ENCODE measurements at regions of chr14 and their contacts with region 1.

Region 1: GRCh38 chr14:70955543-70956480 is 48.6 kb downstream of the PCNX1 start:
- DNase-seq: peak; percentile 55 to 62 (median 58)
- H3K4me3 ChIP-seq: no peak overlapping the region
- H3K4me3 Mint-ChIP-seq: peak overlapping the region in 3 of 8 donors; percentile 66 to 79 (median 74)
- H3K27ac ChIP-seq: no peak overlapping the region
- H3K27ac Mint-ChIP-seq: peak overlapping the region; percentile 15 to 81 (median 70)
- H3K4me1 ChIP-seq: peaks cover 51% of the 10 kb centered on the region
- H3K4me1 Mint-ChIP-seq: peaks cover 35 to 55% (median 42%) of the 10 kb centered on the region in 4 donors
- H3K27me3 ChIP-seq: no peaks in the 10 kb centered on the region
- H3K27me3 Mint-ChIP-seq: no peaks in the 10 kb centered on the region

Region 2: GRCh38 chr14:70821584-70822529 is 134.0 kb before region 1 on chr14:
- CTCF ChIA-PET with region 1: interaction called, 94 read pairs
- POLR2A ChIA-PET with region 1: interaction called, 7 read pairs
- intact Hi-C with region 1: loop called (anchors 1 kb)
- DNase-seq: peak; percentile 37 to 79 (median 49)
- H3K4me3 ChIP-seq: peak overlapping the region; percentile 52 to 73
- H3K4me3 Mint-ChIP-seq: peak overlapping the region; percentile 83 to 93 (median 86)
- H3K27ac ChIP-seq: peak overlapping the region; percentile 14
- H3K27ac Mint-ChIP-seq: peak overlapping the region in 5 of 7 donors; percentile 62 to 77 (median 68)
- H3K4me1 ChIP-seq: peaks cover 18% of the 10 kb centered on the region
- H3K4me1 Mint-ChIP-seq: peaks cover 10 to 23% (median 14%) of the 10 kb centered on the region in 4 donors
- H3K27me3 ChIP-seq: no peaks in the 10 kb centered on the region
- H3K27me3 Mint-ChIP-seq: no peaks in the 10 kb centered on the region

Region 3: GRCh38 chr14:70919774-70920173 is 36.0 kb before region 1 on chr14:
- CTCF ChIA-PET with region 1: interaction called, 16 read pairs
- POLR2A ChIA-PET with region 1: interaction called, 5 read pairs
- intact Hi-C with region 1: no loop called
- DNase-seq: peak in 1 of 5 donors; percentile 64
- H3K4me3 ChIP-seq: no peak overlapping the region
- H3K4me3 Mint-ChIP-seq: peak overlapping the region; percentile 38 to 75 (median 62)
- H3K27ac ChIP-seq: peak overlapping the region; percentile 35
- H3K27ac Mint-ChIP-seq: peak overlapping the region; percentile 54 to 91 (median 78)
- H3K4me1 ChIP-seq: peaks cover 97% of the 10 kb centered on the region
- H3K4me1 Mint-ChIP-seq: peaks cover 67 to 98% (median 84%) of the 10 kb centered on the region in 4 donors
- H3K27me3 ChIP-seq: no peaks in the 10 kb centered on the region
- H3K27me3 Mint-ChIP-seq: no peaks in the 10 kb centered on the region

Region 4: DNA sequence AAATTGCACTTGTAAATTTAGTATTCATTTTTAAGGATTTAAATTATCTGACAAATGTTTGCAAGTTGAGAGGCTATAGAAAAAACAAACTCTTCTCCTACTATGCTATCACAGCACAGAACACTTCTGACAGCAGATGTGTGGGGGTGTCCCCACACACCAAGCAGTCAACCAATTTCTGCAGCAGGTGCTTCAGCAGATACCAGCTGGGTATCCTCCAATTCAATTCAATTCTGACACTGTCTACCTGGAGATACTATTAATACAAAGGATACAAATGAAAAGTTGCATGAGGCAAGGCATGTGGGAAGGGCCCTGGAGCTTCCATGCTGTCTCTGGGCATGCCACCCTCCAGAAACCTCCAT is 13.5 kb before region 1 on chr14:
- CTCF ChIA-PET with region 1: interaction called, 73 read pairs
- POLR2A ChIA-PET with region 1: interaction called, 54 read pairs
- intact Hi-C with region 1: loop called (anchors 1 kb)
- DNase-seq: no peak
- H3K4me3 ChIP-seq: no peak overlapping the region
- H3K4me3 Mint-ChIP-seq: peak overlapping the region in 7 of 8 donors; percentile 1 to 93 (median 65)
- H3K27ac ChIP-seq: no peak overlapping the region
- H3K27ac Mint-ChIP-seq: peak overlapping the region; percentile 80 to 98 (median 89)
- H3K4me1 ChIP-seq: peaks cover 42% of the 10 kb centered on the region
- H3K4me1 Mint-ChIP-seq: peaks cover 55 to 94% (median 73%) of the 10 kb centered on the region in 4 donors
- H3K27me3 ChIP-seq: no peaks in the 10 kb centered on the region
- H3K27me3 Mint-ChIP-seq: no peaks in the 10 kb centered on the region